HAP-1 (cell line): ENCODE measurements at regions of chr7 and their contacts with region 1.

Region 1: GRCh38 chr7:25894902-25895791 is 256.9 kb upstream of the NFE2L3 start:
- DNase-seq: peak; percentile 53 to 87
- H3K4me3 ChIP-seq: no peak overlapping the region
- H3K4me1 ChIP-seq: peaks cover 6% of the 10 kb centered on the region; the same call in 1 of the 2 replicates
- H3K27me3 ChIP-seq: no peaks in the 10 kb centered on the region

Region 2: DNA sequence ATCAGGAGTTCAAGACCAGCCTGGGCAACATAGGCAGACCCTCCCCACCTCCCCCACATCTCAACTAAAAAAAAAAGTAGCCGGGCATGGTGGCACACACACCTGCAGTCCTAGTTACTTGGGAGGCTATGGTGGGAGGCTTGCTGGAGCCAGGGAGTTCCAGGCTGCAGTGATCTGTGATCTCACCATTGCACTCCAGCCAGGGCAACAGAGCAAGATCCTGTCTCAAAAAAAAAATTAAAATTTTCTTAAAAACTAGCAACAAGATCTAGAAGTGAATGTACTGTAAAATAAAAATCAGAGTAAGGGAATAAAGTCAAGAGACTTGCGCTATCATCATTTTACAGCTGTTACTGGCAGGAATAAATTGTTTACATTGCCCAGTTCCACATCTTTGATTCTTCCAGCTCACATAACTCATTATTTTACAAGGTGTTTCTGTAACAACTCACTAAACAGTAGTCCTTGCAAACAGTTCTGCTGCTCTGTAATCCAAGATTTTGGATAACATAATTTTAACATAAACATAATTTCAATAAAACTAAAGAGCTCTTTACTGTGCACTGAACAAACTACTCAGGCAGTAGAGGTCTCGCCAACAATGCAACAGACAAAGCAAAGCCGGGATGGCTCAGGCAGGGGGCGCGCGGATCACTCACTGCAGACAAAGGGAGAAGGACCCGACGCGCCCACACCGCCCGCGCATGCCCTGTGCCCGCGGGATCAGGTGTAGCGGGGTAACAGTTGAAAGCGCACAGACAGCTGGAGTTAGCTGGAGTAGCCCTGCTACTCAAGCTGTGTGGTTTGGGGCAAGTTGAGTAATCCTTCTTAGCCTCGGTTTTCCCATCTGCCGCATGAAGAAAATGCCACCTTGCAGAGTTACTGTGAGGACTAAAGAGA is 183.5 kb after region 1 on chr7:
- in situ Hi-C with region 1: loop called (anchors 10 kb)
- DNase-seq: peak; percentile 62 to 86
- H3K4me3 ChIP-seq: no peak overlapping the region
- H3K4me1 ChIP-seq: peaks cover 25% of the 10 kb centered on the region
- H3K27me3 ChIP-seq: no peaks in the 10 kb centered on the region; the same call in 1 of the 2 replicates

Region 3: DNA sequence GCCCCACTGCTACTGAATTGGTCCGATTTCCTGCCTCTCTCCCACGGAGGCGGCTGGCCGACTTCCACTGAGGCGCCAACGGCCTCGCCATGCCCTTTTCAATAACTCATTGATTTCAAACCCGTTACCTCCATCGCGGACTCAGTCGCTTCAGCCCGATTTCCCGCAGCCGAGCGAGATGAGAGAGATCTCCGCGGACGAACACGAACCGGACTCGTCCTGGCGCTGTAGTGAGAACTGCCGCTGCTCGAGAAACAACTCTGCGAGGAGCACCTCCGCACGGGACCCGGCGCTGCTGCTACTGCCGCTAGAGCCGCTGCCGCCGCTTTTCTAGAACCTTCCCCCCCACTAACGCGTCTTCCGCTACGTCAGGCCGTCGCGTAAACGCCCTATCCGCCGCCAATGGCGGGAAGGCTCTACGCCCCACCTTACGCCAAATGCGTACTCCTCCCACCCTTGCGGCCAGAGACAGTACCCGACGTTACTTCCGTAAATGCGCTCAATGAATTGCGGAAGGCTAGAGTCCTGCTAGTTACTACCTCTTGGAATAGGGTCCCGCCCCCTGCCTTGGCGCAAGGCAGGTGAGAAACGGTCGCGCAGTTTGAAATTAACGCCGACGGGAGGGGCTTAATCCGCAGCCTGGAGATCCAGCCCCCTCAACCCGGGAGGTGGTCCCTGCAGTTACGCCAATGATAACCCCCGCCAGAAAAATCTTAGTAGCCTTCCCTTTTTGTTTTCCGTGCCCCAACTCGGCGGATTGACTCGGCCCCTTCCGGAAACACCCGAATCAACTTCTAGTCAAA is 305.5 kb after region 1 on chr7 and contains the start of gene HNRNPA2B1:
- in situ Hi-C with region 1: loop called (anchors 25 kb)
- DNase-seq: peak; percentile 95 to 97
- H3K4me3 ChIP-seq: peak within 1 kb of the TSS; percentile 99
- H3K4me1 ChIP-seq: peaks cover 28% of the 10 kb centered on the region
- H3K27me3 ChIP-seq: no peaks in the 10 kb centered on the region

Region 4: DNA sequence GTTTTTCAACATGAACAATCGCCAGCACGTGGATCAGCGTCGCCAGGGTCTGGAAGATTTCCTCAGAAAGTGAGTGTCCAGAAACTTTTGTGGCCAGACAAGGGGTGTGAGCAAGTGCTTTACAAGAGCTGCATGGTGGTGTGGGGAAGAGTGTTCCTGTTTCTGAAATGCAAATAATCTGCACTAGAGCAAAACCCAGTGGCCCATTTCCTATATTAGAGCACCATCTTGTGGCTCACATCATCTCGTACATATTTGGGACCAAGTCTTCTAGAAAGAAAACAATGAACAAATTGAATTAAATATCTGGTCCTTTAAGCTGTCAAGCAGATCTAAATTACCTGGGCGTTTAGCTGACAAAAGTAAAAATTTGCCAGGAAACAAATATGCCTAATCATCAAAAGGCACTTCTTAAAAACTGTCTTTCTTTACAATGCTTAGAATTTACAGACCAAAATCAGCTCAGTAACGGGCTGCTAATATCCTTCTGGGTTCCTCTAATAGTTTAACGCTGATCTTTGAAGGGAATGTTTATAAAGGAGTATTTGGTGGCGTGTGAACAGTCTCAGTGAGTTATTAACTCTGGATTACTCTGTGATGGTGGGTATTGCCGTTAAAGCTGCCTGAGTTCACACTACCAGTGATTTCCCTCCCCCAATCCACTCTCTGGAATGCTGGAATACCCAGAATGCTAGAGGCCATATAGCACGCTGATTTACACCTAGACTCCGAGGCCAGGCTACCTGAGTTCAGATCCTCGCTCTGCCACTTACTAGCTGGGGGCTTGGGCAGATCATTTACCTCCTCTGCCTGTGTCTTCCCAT is 470.1 kb after region 1 on chr7:
- in situ Hi-C with region 1: loop called (anchors 5 kb)
- DNase-seq: peak; percentile 70 to 76
- H3K4me3 ChIP-seq: no peak overlapping the region
- H3K4me1 ChIP-seq: no peaks in the 10 kb centered on the region; the same call in 1 of the 2 replicates
- H3K27me3 ChIP-seq: no peaks in the 10 kb centered on the region

Region 5: GRCh38 chr7:26667500-26668133 is 772.5 kb after region 1 on chr7:
- in situ Hi-C with region 1: loop called (anchors 10 kb)
- DNase-seq: peak; percentile 86 to 97
- H3K4me3 ChIP-seq: no peak overlapping the region
- H3K4me1 ChIP-seq: peaks cover 5% of the 10 kb centered on the region; the same call in 1 of the 2 replicates
- H3K27me3 ChIP-seq: no peaks in the 10 kb centered on the region